Posterior cingulate gyrus (tissue), 11 donors: ENCODE measurements at regions of chr5 and their contacts with region 1.

Region 1: DNA sequence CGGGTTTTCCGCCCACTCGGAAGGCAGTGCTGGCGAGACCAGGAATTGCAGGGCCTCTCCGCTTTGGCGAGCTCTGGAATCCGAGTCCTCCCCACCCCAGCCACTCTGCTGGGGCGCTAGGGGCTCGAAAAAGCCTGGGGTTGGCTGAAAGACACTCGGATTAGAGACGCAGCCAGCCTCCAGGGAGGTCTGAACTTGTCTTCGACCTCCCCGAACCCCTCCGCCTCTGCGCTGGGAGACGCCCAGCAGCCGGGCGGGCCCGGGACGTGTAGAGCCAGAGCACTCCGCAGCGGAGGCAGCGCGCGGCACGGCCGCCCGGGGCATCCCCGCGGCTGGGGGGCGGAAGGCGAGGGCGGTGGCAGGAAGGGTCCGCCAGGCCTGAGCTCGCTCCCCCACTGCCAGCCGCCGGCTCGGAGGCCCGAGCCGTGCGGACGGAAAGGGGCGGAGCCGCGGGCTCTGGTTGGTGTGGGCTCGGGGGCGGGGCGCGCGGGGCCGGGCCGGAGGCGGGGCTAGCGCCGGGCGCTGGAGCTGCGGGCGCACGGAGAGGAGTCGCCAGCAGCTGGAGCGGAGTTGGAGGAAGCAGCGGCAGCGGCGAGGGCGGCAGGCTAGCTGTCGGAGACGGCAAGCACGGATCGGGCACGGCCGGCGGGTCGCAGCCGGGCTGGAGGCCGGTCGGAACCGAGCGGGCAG is at the start of gene PIK3R1:
- DNase-seq: peak; percentile 90 to 99 (median 94)

Region 2: DNA sequence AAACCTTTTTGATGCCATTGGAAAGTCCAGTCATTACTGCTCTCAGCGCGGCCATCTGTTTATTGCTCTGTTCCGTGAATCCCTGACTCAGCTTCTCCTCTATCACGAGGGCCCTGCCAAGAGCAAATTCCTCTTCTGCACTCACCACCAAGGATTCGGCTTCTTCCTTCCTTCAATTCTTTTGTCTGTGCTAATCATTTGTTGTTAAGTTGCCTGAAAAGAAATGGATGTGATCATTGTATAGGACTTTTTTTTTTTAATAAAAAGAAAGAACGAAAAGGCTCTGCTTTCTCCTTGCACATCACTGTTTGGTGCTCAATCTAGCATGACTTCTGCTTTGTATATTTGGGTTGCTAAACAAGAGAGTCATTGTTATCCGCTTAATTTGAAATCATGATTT is 128.5 kb before region 1 on chr5:
- intact Hi-C with region 1: loop called (anchors 10 kb)
- DNase-seq: peak in 5 of 10 donors; percentile 13 to 86 (median 41)

Region 3: DNA sequence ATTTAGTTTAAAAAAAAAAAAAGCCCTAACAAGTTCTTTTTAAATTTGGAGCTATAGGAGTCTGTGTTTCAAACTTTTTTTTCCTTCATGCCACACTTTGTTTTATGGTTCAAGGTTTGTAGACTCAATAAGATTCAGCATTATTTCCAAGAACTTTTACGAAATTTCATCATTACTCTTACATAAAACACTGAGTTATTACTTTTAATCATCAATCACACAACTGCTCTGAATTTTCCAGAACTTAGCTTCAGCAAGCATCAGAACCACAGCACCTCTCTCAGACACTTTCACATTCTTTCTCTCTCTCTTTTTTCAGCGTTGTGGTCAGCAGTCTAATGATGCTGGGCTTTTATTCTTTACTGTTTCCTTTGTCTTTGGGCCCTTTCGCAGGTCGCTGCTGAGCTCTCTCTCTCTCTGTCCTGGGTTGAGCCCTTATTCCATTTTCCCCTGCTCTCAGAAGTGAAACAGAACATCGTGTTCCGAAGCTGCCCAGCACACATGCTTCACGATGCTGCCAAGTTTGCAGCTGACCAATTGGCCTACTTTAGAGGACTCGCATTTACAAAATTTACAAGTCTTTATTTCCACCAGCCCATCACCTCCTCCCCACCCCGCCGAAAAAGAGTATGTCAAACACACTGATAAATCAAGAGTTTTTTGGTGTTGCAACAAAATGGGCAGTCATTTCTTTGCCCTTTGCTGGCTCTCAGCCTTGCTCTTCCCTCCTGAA is 44.4 kb before region 1 on chr5:
- intact Hi-C with region 1: loop called (anchors 1 kb)
- DNase-seq: peak in 9 of 10 donors; percentile 38 to 92 (median 65)

Region 4: GRCh38 chr5:68187268-68188055 is 27.9 kb before region 1 on chr5:
- intact Hi-C with region 1: loop called (anchors 1 kb)
- DNase-seq: peak; percentile 80 to 99 (median 86)

Region 5: GRCh38 chr5:68252673-68253623 is 37.6 kb after region 1 on chr5:
- intact Hi-C with region 1: loop called (anchors 5 kb)
- DNase-seq: peak in 8 of 10 donors; percentile 48 to 90 (median 64)